ENCODE measurements at regions of chr4 and their contacts with region 1.

Region 1: DNA sequence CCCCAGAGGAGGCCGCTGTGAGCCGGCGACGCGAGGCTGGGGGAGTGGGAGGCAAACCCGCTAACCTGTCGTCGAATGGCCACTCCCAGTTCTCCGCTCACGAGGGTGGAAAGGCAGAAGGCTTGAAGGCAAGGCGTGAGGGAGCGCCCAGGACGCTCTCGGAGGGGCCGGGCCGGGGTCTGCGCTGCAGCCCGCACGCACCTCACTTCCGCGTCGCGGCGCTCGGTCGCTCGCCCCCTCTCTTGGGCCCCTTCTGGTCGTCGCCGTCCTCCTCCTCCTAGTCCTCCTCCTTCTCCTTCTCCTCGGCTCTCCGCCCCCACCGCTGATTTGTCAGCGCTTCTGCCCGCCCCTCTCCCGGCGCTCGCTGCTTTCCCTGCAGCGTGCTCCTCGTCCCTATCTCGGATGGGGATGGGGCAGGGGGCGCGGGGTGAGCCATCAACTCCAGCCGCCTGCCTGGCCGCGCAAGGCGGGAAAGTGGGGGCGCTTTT is at the start of gene SNCA:
- DNase-seq: peak; percentile 31 to 48 (median 36)
- H3K4me3 ChIP-seq: peak within 1 kb of the TSS; percentile 60 to 83 (median 60)
- H3K4me3 Mint-ChIP-seq: peak within 1 kb of the TSS; percentile 91 to 96
- H3K27ac ChIP-seq: peak within 1 kb of the TSS in 1 of 2 donors; percentile 67
- H3K27ac Mint-ChIP-seq: peak within 1 kb of the TSS in 6 of 7 donors; percentile 58 to 84 (median 78)
- H3K4me1 ChIP-seq: peaks cover 18 to 29% of the 10 kb centered on the region in 2 donors
- H3K4me1 Mint-ChIP-seq: peaks cover 28% of the 10 kb centered on the region
- H3K27me3 ChIP-seq: peaks cover 0 to 4% of the 10 kb centered on the region in 2 donors
- H3K27me3 Mint-ChIP-seq: peaks cover 11 to 15% (median 13%) of the 10 kb centered on the region in 3 donors
- CTCF ChIP-seq: no peak
- polyA plus RNA-seq, gene SNCA: 13.2 to 39.4 (median 24.3) TPM

Region 2: GRCh38 chr4:89110986-89111832 is 725.7 kb before region 1 on chr4 and contains the start of gene TIGD2:
- intact Hi-C with region 1: loop called in 1 of 2 experiments (anchors 5 kb)
- DNase-seq: peak; percentile 82 to 87 (median 83)
- H3K4me3 ChIP-seq: peak within 1 kb of the TSS; percentile 54 to 96 (median 90)
- H3K4me3 Mint-ChIP-seq: peak within 1 kb of the TSS; percentile 95 to 96
- H3K27ac ChIP-seq: peak within 1 kb of the TSS in 1 of 2 donors; percentile 81
- H3K27ac Mint-ChIP-seq: peak within 1 kb of the TSS; percentile 75 to 93 (median 84)
- H3K4me1 ChIP-seq: peaks cover 15 to 22% of the 10 kb centered on the region in 2 donors
- H3K4me1 Mint-ChIP-seq: peaks cover 22% of the 10 kb centered on the region
- H3K27me3 ChIP-seq: peaks cover 20 to 22% of the 10 kb centered on the region in 2 donors
- H3K27me3 Mint-ChIP-seq: peaks cover 20 to 30% (median 24%) of the 10 kb centered on the region in 3 donors
- CTCF ChIP-seq: peak; percentile 99
- polyA plus RNA-seq, gene TIGD2: 1.00 to 2.4 (median 2.1) TPM